Calu3 (cell line): ENCODE measurements at regions of chr7 and their contacts with region 1.

Region 1: GRCh38 chr7:138865843-138866242 is 67.8 kb upstream of the ATP6V0A4 start:
- DNase-seq: peak; percentile 65
- H3K4me3 Mint-ChIP-seq: no peak overlapping the region
- H3K27ac Mint-ChIP-seq: no peak overlapping the region
- H3K4me1 Mint-ChIP-seq: peaks cover 24% of the 10 kb centered on the region
- H3K27me3 Mint-ChIP-seq: no peaks in the 10 kb centered on the region
- CTCF ChIP-seq: peak; percentile 54

Region 2: GRCh38 chr7:138002096-138002827 is 863.6 kb before region 1 on chr7:
- CTCF ChIA-PET with region 1: no interaction called
- intact Hi-C with region 1: loop called (anchors 10 kb)
- DNase-seq: peak; percentile 98
- H3K4me3 Mint-ChIP-seq: peak overlapping the region; percentile 88
- H3K27ac Mint-ChIP-seq: peak overlapping the region; percentile 96
- H3K4me1 Mint-ChIP-seq: peaks cover 21% of the 10 kb centered on the region
- H3K27me3 Mint-ChIP-seq: no peaks in the 10 kb centered on the region
- CTCF ChIP-seq: peak; percentile 76

Region 3: GRCh38 chr7:138565451-138566114 is 300.3 kb before region 1 on chr7:
- CTCF ChIA-PET with region 1: no interaction called
- intact Hi-C with region 1: loop called (anchors 1 kb)
- DNase-seq: no peak
- H3K4me3 Mint-ChIP-seq: peak overlapping the region; percentile 70
- H3K27ac Mint-ChIP-seq: peak overlapping the region; percentile 95
- H3K4me1 Mint-ChIP-seq: peaks cover 26% of the 10 kb centered on the region
- H3K27me3 Mint-ChIP-seq: no peaks in the 10 kb centered on the region
- CTCF ChIP-seq: no peak

Region 4: GRCh38 chr7:138738551-138739335 is 127.1 kb before region 1 on chr7:
- CTCF ChIA-PET with region 1: interaction called, 3 read pairs
- intact Hi-C with region 1: loop called (anchors 1 kb)
- DNase-seq: peak; percentile 88
- H3K4me3 Mint-ChIP-seq: no peak overlapping the region
- H3K27ac Mint-ChIP-seq: peak overlapping the region; percentile 41
- H3K4me1 Mint-ChIP-seq: peaks cover 18% of the 10 kb centered on the region
- H3K27me3 Mint-ChIP-seq: no peaks in the 10 kb centered on the region
- CTCF ChIP-seq: peak; percentile 86

Region 5: GRCh38 chr7:138797841-138798271 is 68.0 kb before region 1 on chr7 and contains the starts of genes ATP6V0A4 and TMEM213:
- CTCF ChIA-PET with region 1: interaction called, 3 read pairs
- intact Hi-C with region 1: loop called (anchors 2 kb)
- DNase-seq: peak; percentile 72
- H3K4me3 Mint-ChIP-seq: peak within 1 kb of the TSS; percentile 65
- H3K27ac Mint-ChIP-seq: peak within 1 kb of the TSS; percentile 49
- H3K4me1 Mint-ChIP-seq: peaks cover 51% of the 10 kb centered on the region
- H3K27me3 Mint-ChIP-seq: no peaks in the 10 kb centered on the region
- CTCF ChIP-seq: no peak
- total RNA-seq, gene ATP6V0A4: 5.6 and 7.7 TPM in 2 replicates
- total RNA-seq, gene TMEM213: 9.8 and 11.3 TPM in 2 replicates